Tibial artery (tissue), 4 donors: ENCODE measurements at regions of chr15 and their contacts with region 1.

Region 1: DNA sequence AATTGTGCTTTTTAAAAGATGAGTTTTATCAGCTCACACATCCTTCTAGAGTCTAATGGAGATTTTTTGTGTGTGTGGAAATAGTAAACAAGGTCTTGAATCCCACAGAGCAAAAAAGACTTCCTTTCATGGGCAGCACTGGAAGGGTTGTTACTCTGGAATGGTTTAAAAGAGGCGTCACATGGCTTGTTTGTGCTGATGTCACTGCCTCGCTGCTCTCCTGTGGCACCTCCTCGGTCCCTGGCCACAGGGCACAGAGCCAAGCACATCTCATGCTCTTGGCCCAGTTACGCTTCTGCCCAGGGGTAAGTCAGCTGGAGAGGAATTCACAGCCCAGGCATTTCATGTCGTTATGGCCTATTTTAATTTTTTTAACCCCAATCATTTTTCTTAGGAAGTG is 53.2 kb downstream of the PGPEP1L start:
- DNase-seq: peak; percentile 90 to 97
- H3K4me3 ChIP-seq: no peak overlapping the region
- H3K27ac ChIP-seq: peak overlapping the region; percentile 95
- H3K4me1 ChIP-seq: peaks cover 0 to 61% (median 49%) of the 10 kb centered on the region in 4 donors
- H3K27me3 ChIP-seq: no peaks in the 10 kb centered on the region
- CTCF ChIP-seq: no peak

Region 2: DNA sequence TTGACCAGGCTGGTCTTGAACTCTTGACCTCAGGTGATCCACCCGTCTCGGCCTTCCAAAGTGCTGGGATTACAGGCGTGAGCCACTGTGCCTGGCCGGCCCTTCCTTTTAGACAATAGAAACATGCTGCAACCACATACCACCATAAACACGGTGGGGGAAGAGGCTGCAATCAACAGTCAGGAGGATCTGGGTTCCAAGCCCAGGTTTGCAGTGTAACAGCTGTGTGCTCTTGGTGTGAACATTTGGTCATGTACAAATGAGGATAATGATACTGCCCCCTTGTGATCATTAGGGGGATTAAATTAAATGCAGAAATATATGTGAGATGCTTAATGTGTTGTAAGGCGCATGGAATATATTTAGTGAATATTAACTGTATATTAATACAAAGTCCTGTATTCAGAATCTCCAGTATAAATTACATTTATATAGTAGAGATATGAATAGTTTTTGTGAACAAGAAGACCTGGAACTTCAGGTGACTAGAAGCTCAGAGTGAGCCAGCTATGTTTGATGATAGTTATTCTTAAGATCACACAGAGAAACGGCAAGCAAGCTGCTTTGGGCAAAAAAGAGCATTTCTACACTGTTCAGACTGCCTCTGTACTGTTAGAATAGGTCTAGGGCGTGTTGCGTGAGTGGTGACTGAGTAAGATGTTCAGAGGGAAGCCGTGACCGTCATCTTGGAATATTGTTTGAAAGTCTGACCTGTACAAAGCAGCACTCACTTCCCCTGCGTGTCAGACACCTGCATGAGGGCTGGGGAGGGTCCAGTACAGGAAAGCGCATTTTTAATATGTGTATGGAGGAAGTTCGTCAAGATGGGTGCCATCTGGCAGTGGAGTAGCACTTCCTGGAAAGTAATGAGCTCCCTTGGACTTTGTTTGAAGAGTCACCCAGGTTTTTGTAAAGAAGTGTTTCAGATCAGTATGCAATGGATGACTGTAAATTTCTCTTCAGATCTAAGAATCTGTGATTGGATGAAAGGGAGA is 72.6 kb before region 1 on chr15:
- intact Hi-C with region 1: loop called (anchors 10 kb)
- DNase-seq: no peak
- H3K4me3 ChIP-seq: no peak overlapping the region
- H3K27ac ChIP-seq: peak overlapping the region; percentile 78 to 89
- H3K4me1 ChIP-seq: peaks cover 0 to 100% (median 71%) of the 10 kb centered on the region in 4 donors
- H3K27me3 ChIP-seq: no peaks in the 10 kb centered on the region
- CTCF ChIP-seq: peak; percentile 52 to 55

Region 3: DNA sequence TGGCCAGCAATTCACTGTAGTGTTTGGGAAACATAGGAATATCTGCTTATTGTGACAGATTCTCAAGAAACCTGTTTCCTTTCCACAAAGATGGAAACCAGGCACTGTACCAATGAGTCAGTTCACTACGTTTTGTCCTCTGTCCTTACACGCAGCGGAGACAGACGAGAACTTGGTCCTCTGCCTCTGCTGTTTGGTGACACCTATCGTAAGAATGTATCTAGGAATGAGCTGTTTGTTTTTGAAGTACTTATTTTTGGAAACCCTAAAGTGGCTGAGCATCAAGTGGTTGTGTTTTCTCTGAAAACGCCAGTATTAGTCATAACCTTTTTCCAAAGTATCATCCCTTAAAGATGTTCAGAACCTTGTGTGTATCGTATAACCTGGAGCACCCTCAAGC is 39.8 kb before region 1 on chr15:
- intact Hi-C with region 1: loop called (anchors 2 kb)
- DNase-seq: no peak
- H3K4me3 ChIP-seq: no peak overlapping the region
- H3K27ac ChIP-seq: peak overlapping the region; percentile 48 to 68
- H3K4me1 ChIP-seq: peaks cover 0 to 34% (median 16%) of the 10 kb centered on the region in 4 donors
- H3K27me3 ChIP-seq: no peaks in the 10 kb centered on the region
- CTCF ChIP-seq: no peak

Region 4: GRCh38 chr15:99042892-99043291 is 88.5 kb after region 1 on chr15:
- intact Hi-C with region 1: no loop called
- DNase-seq: no peak
- H3K4me3 ChIP-seq: no peak overlapping the region
- H3K27ac ChIP-seq: no peak overlapping the region
- H3K4me1 ChIP-seq: no peaks in the 10 kb centered on the region
- H3K27me3 ChIP-seq: no peaks in the 10 kb centered on the region
- CTCF ChIP-seq: no peak